Heart left ventricle (tissue), 16 donors: ENCODE measurements at regions of chr2 and their contacts with region 1.

Region 1: DNA sequence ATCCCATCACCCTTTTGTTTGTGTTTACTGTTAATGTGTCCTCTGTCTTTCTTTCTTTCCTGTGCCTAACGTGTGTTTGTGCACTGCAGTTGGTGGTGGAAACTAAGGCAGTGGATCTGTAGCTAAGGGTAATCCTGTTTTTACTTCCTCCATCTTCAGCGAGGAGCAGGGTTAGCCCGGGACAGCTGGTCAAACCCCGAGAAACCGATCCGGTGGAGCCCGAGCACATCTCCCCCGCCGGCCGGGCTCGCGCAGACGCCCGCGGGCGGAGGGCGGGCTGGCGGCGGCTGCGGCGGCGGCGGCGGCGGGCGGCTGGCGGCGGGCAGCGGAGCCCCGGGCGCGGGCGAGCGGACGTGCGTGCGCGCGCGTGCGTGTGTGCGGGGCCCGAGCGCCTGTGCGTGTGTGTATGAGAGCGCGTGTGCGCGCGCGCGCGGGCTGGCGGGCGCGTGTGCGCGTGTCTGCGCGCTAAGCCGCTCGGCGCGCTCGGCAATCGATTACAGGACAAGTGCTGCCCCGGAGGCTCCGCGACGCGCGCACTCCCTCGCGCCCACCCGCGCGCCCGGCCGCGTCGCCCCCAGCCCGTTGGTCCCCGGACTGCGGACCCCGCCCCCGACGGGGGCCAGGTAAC is at the start of gene IKZF2:
- DNase-seq: peak; percentile 84 to 93 (median 86)
- ATAC-seq: peak; percentile 79 to 96 (median 92)
- H3K4me3 ChIP-seq: peak within 1 kb of the TSS; percentile 72 to 95 (median 83)
- H3K27ac ChIP-seq: peak within 1 kb of the TSS; percentile 60 to 96 (median 94)
- H3K4me1 ChIP-seq: peaks cover 0 to 31% (median 7%) of the 10 kb centered on the region in 12 donors
- H3K27me3 ChIP-seq: no peaks in the 10 kb centered on the region
- CTCF ChIP-seq: no peak
- POLR2A ChIP-seq: peak in 1 of 2 donors; percentile 1
- total RNA-seq, gene IKZF2: 4.9 to 8.0 (median 6.2) TPM

Region 2: GRCh38 chr2:212777020-212777491 is 374.5 kb before region 1 on chr2:
- intact Hi-C with region 1: loop called (anchors 1 to 5 kb)
- DNase-seq: no peak
- ATAC-seq: no peak
- H3K4me3 ChIP-seq: no peak overlapping the region
- H3K27ac ChIP-seq: no peak overlapping the region
- H3K4me1 ChIP-seq: peaks cover 0 to 4% (median 0%) of the 10 kb centered on the region in 12 donors
- H3K27me3 ChIP-seq: no peaks in the 10 kb centered on the region
- CTCF ChIP-seq: peak; percentile 42 to 80 (median 68)
- POLR2A ChIP-seq: no peak

Region 3: GRCh38 chr2:213002383-213002782 is 149.2 kb before region 1 on chr2:
- intact Hi-C with region 1: loop called in 1 of 10 experiments (anchors 10 kb)
- DNase-seq: no peak
- ATAC-seq: peak in 1 of 4 donors; percentile 47
- H3K4me3 ChIP-seq: no peak overlapping the region
- H3K27ac ChIP-seq: peak overlapping the region in 1 of 12 donors; percentile 5
- H3K4me1 ChIP-seq: peaks cover 0 to 23% (median 13%) of the 10 kb centered on the region in 12 donors
- H3K27me3 ChIP-seq: no peaks in the 10 kb centered on the region
- CTCF ChIP-seq: no peak
- POLR2A ChIP-seq: no peak

Region 4: GRCh38 chr2:213065583-213066442 is 85.7 kb before region 1 on chr2:
- intact Hi-C with region 1: loop called in 1 of 10 experiments (anchors 2 kb)
- DNase-seq: peak; percentile 11 to 55 (median 46)
- ATAC-seq: peak; percentile 70 to 94 (median 89)
- H3K4me3 ChIP-seq: peak overlapping the region in 8 of 12 donors; percentile 1 to 36 (median 22)
- H3K27ac ChIP-seq: peak overlapping the region in 10 of 12 donors; percentile 2 to 71 (median 56)
- H3K4me1 ChIP-seq: peaks cover 0 to 34% (median 8%) of the 10 kb centered on the region in 12 donors
- H3K27me3 ChIP-seq: no peaks in the 10 kb centered on the region
- CTCF ChIP-seq: no peak
- POLR2A ChIP-seq: no peak

Region 5: DNA sequence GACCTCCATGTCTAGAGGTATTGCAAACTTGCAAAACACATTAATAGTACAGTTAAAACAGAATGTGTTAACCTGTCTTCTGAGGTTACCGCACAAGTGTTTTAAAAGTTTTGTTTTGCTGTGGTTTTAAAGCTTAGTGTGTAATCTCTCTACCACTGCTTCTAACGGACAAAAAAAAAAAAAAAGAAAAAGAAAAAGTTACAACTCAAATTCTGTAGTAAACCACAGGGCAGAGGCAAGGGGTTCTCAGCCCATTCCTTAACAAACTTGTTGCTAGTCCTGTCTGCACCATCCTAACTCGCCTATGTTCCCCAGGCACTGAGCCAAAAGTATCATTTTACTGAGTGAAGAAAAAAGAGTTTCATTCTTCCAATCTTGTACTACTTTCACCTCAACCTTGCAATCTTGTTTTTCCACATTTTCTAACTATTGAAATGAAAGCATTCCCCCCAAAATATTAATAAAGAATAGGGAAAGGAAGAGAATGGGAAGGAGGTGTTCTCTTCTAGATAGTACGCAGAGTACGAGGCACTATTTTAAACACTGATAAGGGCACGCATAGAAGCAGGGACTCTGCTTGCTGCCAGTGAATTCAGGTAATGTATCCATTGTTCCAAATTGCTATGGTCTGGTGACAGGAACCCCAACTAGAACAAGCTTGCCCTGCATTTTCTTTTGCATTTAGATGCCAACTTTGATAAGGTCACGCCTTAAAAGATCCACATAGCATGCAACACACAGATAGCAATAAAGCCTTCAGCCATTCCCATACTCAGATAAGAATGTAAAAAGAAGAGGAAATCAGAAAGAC is 47.3 kb before region 1 on chr2:
- intact Hi-C with region 1: loop called in 1 of 10 experiments (anchors 5 kb)
- DNase-seq: no peak
- ATAC-seq: peak; percentile 68 to 92 (median 86)
- H3K4me3 ChIP-seq: peak overlapping the region in 8 of 12 donors; percentile 3 to 35 (median 11)
- H3K27ac ChIP-seq: peak overlapping the region in 9 of 12 donors; percentile 1 to 65 (median 35)
- H3K4me1 ChIP-seq: peaks cover 0 to 22% (median 3%) of the 10 kb centered on the region in 12 donors
- H3K27me3 ChIP-seq: no peaks in the 10 kb centered on the region
- CTCF ChIP-seq: no peak
- POLR2A ChIP-seq: no peak

Region 6: GRCh38 chr2:213923543-213923942 is 772.0 kb after region 1 on chr2:
- intact Hi-C with region 1: no loop called
- DNase-seq: no peak
- ATAC-seq: no peak
- H3K4me3 ChIP-seq: no peak overlapping the region
- H3K27ac ChIP-seq: no peak overlapping the region
- H3K4me1 ChIP-seq: no peaks in the 10 kb centered on the region
- H3K27me3 ChIP-seq: no peaks in the 10 kb centered on the region
- CTCF ChIP-seq: no peak
- POLR2A ChIP-seq: no peak